MCF 10A (cell line): ENCODE measurements at regions of chr10 and their contacts with region 1.

Region 1: GRCh38 chr10:101818119-101818871 is at the start of gene OGA:
- DNase-seq: peak; percentile 99
- H3K4me3 Mint-ChIP-seq: peak within 1 kb of the TSS; percentile 84
- H3K27ac Mint-ChIP-seq: peak within 1 kb of the TSS; percentile 89
- H3K4me1 Mint-ChIP-seq: peaks cover 16% of the 10 kb centered on the region
- H3K27me3 Mint-ChIP-seq: no peaks in the 10 kb centered on the region
- CTCF ChIP-seq: no peak
- total RNA-seq, gene OGA: 96.1 and 115 TPM in 2 replicates

Region 2: GRCh38 chr10:101587725-101588653 is 230.3 kb before region 1 on chr10 and contains the starts of genes DPCD and POLL:
- CTCF ChIA-PET with region 1: no interaction called
- POLR2A ChIA-PET with region 1: interaction called, 12 read pairs
- intact Hi-C with region 1: no loop called
- DNase-seq: peak; percentile 93
- H3K4me3 Mint-ChIP-seq: peak within 1 kb of the TSS; percentile 93
- H3K27ac Mint-ChIP-seq: peak within 1 kb of the TSS; percentile 87
- H3K4me1 Mint-ChIP-seq: peaks cover 17% of the 10 kb centered on the region
- H3K27me3 Mint-ChIP-seq: no peaks in the 10 kb centered on the region
- CTCF ChIP-seq: no peak
- total RNA-seq, gene DPCD: 24.2 and 25.7 TPM in 2 replicates
- total RNA-seq, gene POLL: 38.5 and 40.7 TPM in 2 replicates

Region 3: GRCh38 chr10:101797403-101798059 is 20.8 kb before region 1 on chr10:
- CTCF ChIA-PET with region 1: interaction called, 3 read pairs
- POLR2A ChIA-PET with region 1: interaction called, 35 read pairs
- intact Hi-C with region 1: no loop called
- DNase-seq: no peak
- H3K4me3 Mint-ChIP-seq: no peak overlapping the region
- H3K27ac Mint-ChIP-seq: no peak overlapping the region
- H3K4me1 Mint-ChIP-seq: no peaks in the 10 kb centered on the region
- H3K27me3 Mint-ChIP-seq: no peaks in the 10 kb centered on the region
- CTCF ChIP-seq: no peak

Region 4: GRCh38 chr10:101830322-101831168 is 12.2 kb after region 1 on chr10:
- CTCF ChIA-PET with region 1: interaction called, 16 read pairs
- POLR2A ChIA-PET with region 1: interaction called, 19 read pairs
- intact Hi-C with region 1: no loop called
- DNase-seq: peak; percentile 87
- H3K4me3 Mint-ChIP-seq: peak overlapping the region; percentile 80
- H3K27ac Mint-ChIP-seq: peak overlapping the region; percentile 75
- H3K4me1 Mint-ChIP-seq: peaks cover 25% of the 10 kb centered on the region
- H3K27me3 Mint-ChIP-seq: no peaks in the 10 kb centered on the region
- CTCF ChIP-seq: no peak

Region 5: DNA sequence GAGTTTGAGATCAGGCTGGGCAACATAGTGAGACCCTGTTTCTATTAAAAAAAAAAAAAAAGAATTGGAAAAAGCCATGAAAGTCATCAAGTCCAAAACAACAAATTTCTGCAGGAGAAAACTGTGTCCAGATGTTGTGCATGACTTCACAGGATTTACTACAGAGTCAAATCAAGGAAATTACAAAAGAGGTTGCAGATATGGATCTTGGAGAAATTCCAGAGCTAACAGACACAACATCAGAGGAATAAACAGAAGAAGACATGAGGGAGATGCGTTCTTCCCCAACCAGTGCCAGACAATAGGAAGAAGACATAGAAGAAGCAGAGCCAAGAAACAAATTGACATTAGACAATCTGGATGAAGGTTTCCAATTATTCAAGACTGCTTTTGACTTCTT is 49.6 kb after region 1 on chr10:
- CTCF ChIA-PET with region 1: no interaction called
- POLR2A ChIA-PET with region 1: no interaction called
- intact Hi-C with region 1: no loop called
- DNase-seq: no peak
- H3K4me3 Mint-ChIP-seq: no peak overlapping the region
- H3K27ac Mint-ChIP-seq: no peak overlapping the region
- H3K4me1 Mint-ChIP-seq: no peaks in the 10 kb centered on the region
- H3K27me3 Mint-ChIP-seq: no peaks in the 10 kb centered on the region
- CTCF ChIP-seq: no peak

Region 6: DNA sequence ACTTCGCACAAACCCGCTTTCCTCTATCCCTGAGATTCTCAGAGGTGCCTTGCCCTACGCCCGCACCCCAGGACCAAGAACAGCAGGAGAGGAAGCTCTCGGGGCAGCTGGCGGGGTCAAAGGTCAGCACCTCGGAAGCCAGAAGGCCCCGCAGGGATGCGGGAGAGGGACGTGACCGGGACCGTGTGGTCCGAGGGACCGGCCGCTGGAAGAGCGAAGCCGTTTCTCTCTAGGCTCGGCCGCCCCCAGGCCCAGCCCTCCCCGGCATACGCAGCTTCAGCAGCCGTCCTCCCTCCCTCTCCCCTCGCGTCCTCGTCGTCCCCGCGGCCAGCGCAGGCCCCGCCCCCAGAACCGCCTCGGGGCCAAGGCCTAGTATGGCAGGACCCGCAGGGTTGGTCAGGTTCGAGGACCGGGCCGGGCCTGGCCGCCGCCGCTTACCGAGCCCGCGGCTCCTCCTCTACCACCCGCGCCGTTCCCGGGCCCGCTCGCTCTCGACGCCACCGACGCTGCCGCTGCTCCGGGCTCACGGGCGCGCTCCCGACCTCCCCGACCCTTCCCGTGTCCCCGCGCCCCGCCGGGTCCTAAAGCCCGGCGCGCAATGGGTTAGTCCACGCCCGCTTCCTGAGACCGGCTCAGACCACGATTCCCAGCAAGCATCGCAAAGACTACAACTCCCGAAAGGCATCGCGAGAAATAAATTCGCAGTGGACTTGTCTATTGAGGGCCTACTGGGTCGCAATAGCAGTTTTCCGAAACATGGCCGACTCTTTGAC is 237.5 kb after region 1 on chr10 and contains the start of gene ARMH3:
- CTCF ChIA-PET with region 1: interaction called, 3 read pairs
- POLR2A ChIA-PET with region 1: interaction called, 19 read pairs
- intact Hi-C with region 1: no loop called
- DNase-seq: peak; percentile 98
- H3K4me3 Mint-ChIP-seq: peak within 1 kb of the TSS; percentile 92
- H3K27ac Mint-ChIP-seq: peak within 1 kb of the TSS; percentile 89
- H3K4me1 Mint-ChIP-seq: peaks cover 24% of the 10 kb centered on the region
- H3K27me3 Mint-ChIP-seq: no peaks in the 10 kb centered on the region
- CTCF ChIP-seq: no peak
- total RNA-seq, gene ARMH3: 17.6 and 18.9 TPM in 2 replicates

Region 7: GRCh38 chr10:102114861-102115618 is 296.7 kb after region 1 on chr10:
- CTCF ChIA-PET with region 1: interaction called, 3 read pairs
- POLR2A ChIA-PET with region 1: interaction called, 24 read pairs
- intact Hi-C with region 1: no loop called
- DNase-seq: peak; percentile 93
- H3K4me3 Mint-ChIP-seq: peak overlapping the region; percentile 92
- H3K27ac Mint-ChIP-seq: peak overlapping the region; percentile 92
- H3K4me1 Mint-ChIP-seq: peaks cover 59% of the 10 kb centered on the region
- H3K27me3 Mint-ChIP-seq: no peaks in the 10 kb centered on the region
- CTCF ChIP-seq: no peak